ENCODE measurements at regions of chr15 and their contacts with region 1.

Region 1: GRCh38 chr15:74635228-74635627 is 19.6 kb downstream of the CLK3 start:
- DNase-seq: no peak
- ATAC-seq: peak; percentile 91
- H3K4me3 ChIP-seq: no peak overlapping the region
- H3K27ac ChIP-seq: no peak overlapping the region
- H3K4me1 ChIP-seq: no peaks in the 10 kb centered on the region
- H3K27me3 ChIP-seq: no peaks in the 10 kb centered on the region
- CTCF ChIP-seq: peak; percentile 89 to 98 (median 95); a peak in 5 of 6 replicates
- EP300 ChIP-seq: no peak
- POLR2A ChIP-seq: 0 out of 2 replicates have a peak, but pooled peaks have one; percentile 12
- RAD21 ChIP-seq: peak; percentile 95

Region 2: GRCh38 chr15:74240002-74240568 is 395.1 kb before region 1 on chr15:
- CTCF ChIA-PET with region 1: no interaction called
- POLR2A ChIA-PET with region 1: no interaction called
- RAD21 ChIA-PET with region 1: no interaction called
- SMC1A ChIA-PET with region 1: no interaction called
- in situ Hi-C with region 1: no loop called
- intact Hi-C with region 1: no loop called
- DNase-seq: no peak
- ATAC-seq: no peak
- H3K4me3 ChIP-seq: no peak overlapping the region
- H3K27ac ChIP-seq: no peak overlapping the region
- H3K4me1 ChIP-seq: peaks cover 10% of the 10 kb centered on the region
- H3K27me3 ChIP-seq: no peaks in the 10 kb centered on the region; a peak in 1 of 4 replicates
- CTCF ChIP-seq: 0 out of 6 replicates have a peak, but pooled peaks of 1 of the 3 experiments have one; percentile 1
- EP300 ChIP-seq: no peak
- POLR2A ChIP-seq: no peak
- RAD21 ChIP-seq: no peak

Region 3: DNA sequence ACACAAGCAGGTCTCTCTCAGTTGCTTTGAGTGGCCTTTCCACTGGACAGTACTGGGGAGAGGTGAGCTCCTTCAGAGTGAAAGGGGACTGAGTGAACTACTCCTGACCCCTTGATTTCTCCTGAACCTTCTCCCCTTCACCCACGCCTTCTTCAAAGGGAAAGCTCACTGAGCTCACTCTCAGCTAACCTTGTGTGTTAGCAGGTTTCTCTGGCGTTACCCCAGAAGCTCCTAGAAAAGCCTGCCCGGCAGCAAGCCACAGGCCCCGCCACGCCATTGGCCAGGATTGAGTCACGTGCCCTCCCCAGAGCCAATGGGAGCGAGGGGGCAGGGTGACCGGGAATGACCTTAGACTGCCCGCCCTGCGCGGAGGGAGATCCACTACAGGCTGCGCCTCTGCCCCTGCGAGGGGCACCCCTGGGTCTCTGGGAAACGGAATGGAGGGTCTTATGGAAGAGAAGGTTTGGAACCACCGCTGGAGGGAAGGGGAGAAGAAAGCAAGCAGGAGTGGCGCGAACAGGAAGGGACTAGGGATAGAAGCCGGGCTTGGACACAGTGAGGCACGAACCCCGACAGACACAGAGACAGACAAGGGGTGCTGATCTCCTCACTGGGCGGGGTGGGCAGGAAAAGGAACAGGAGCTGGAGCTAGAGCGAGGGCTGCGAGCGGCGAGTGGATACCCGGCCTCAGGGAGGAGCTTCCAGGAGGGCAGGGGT is 36.9 kb before region 1 on chr15:
- CTCF ChIA-PET with region 1: interaction called, 13 read pairs
- POLR2A ChIA-PET with region 1: no interaction called
- RAD21 ChIA-PET with region 1: interaction called, 3 read pairs
- SMC1A ChIA-PET with region 1: interaction called, 4 read pairs
- in situ Hi-C with region 1: no loop called
- intact Hi-C with region 1: no loop called
- DNase-seq: peak; percentile 69
- ATAC-seq: peak; percentile 99
- H3K4me3 ChIP-seq: peak overlapping the region; percentile 74
- H3K27ac ChIP-seq: peak overlapping the region; percentile 73
- H3K4me1 ChIP-seq: peaks cover 12% of the 10 kb centered on the region; the same call in 1 of the 2 replicates
- H3K27me3 ChIP-seq: no peaks in the 10 kb centered on the region
- CTCF ChIP-seq: no peak
- EP300 ChIP-seq: no peak
- POLR2A ChIP-seq: peak; percentile 95
- RAD21 ChIP-seq: no peak

Region 4: DNA sequence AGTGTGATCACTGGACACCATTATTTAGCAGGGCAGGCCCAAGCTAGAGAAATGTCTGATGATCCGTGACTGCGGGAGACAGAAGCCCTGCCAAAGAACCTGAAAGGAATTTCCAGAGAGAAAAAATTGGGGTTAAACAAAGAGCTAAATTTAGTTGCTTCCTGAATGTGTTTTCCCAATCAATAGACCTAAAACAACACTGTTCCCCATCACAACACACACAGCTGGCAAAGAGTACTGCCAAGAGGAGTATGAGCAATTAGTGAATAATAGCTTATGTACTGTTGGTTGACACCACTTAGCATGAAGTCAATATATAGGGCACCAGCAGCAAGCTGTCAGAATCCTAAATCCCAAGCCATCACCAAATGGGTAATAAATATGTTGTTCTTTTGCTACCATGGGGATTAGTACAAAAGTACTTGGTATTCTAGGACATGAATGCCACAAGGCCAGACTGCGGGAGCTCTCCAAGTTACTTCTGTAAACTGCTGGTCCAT is 16.1 kb after region 1 on chr15:
- CTCF ChIA-PET with region 1: interaction called, 21 read pairs
- POLR2A ChIA-PET with region 1: no interaction called
- RAD21 ChIA-PET with region 1: interaction called, 4 read pairs
- SMC1A ChIA-PET with region 1: interaction called, 9 read pairs
- in situ Hi-C with region 1: no loop called
- intact Hi-C with region 1: no loop called
- DNase-seq: no peak
- ATAC-seq: no peak
- H3K4me3 ChIP-seq: no peak overlapping the region
- H3K27ac ChIP-seq: no peak overlapping the region
- H3K4me1 ChIP-seq: peaks cover 9% of the 10 kb centered on the region; the same call in 1 of the 2 replicates
- H3K27me3 ChIP-seq: no peaks in the 10 kb centered on the region
- CTCF ChIP-seq: no peak
- EP300 ChIP-seq: no peak
- POLR2A ChIP-seq: no peak
- RAD21 ChIP-seq: no peak

Region 5: GRCh38 chr15:74723754-74724334 is 88.6 kb after region 1 on chr15:
- CTCF ChIA-PET with region 1: no interaction called
- POLR2A ChIA-PET with region 1: no interaction called
- RAD21 ChIA-PET with region 1: no interaction called
- SMC1A ChIA-PET with region 1: no interaction called
- in situ Hi-C with region 1: no loop called
- intact Hi-C with region 1: no loop called
- DNase-seq: no peak
- ATAC-seq: peak; percentile 48; the same call in 2 of the 3 replicates
- H3K4me3 ChIP-seq: no peak overlapping the region
- H3K27ac ChIP-seq: no peak overlapping the region
- H3K4me1 ChIP-seq: peaks cover 4% of the 10 kb centered on the region
- H3K27me3 ChIP-seq: peaks cover 0 to 3% of the 10 kb centered on the region in 2 experiments; a peak in 3 of 4 replicates
- CTCF ChIP-seq: no peak
- EP300 ChIP-seq: no peak
- POLR2A ChIP-seq: no peak
- RAD21 ChIP-seq: no peak

Region 6: GRCh38 chr15:74746389-74746788 is 111.2 kb after region 1 on chr15:
- CTCF ChIA-PET with region 1: no interaction called
- POLR2A ChIA-PET with region 1: no interaction called
- RAD21 ChIA-PET with region 1: no interaction called
- SMC1A ChIA-PET with region 1: no interaction called
- in situ Hi-C with region 1: no loop called
- intact Hi-C with region 1: no loop called
- DNase-seq: no peak
- ATAC-seq: no peak
- H3K4me3 ChIP-seq: no peak overlapping the region
- H3K27ac ChIP-seq: no peak overlapping the region
- H3K4me1 ChIP-seq: no peaks in the 10 kb centered on the region
- H3K27me3 ChIP-seq: no peaks in the 10 kb centered on the region
- CTCF ChIP-seq: no peak
- EP300 ChIP-seq: no peak
- POLR2A ChIP-seq: no peak
- RAD21 ChIP-seq: no peak

Region 7: DNA sequence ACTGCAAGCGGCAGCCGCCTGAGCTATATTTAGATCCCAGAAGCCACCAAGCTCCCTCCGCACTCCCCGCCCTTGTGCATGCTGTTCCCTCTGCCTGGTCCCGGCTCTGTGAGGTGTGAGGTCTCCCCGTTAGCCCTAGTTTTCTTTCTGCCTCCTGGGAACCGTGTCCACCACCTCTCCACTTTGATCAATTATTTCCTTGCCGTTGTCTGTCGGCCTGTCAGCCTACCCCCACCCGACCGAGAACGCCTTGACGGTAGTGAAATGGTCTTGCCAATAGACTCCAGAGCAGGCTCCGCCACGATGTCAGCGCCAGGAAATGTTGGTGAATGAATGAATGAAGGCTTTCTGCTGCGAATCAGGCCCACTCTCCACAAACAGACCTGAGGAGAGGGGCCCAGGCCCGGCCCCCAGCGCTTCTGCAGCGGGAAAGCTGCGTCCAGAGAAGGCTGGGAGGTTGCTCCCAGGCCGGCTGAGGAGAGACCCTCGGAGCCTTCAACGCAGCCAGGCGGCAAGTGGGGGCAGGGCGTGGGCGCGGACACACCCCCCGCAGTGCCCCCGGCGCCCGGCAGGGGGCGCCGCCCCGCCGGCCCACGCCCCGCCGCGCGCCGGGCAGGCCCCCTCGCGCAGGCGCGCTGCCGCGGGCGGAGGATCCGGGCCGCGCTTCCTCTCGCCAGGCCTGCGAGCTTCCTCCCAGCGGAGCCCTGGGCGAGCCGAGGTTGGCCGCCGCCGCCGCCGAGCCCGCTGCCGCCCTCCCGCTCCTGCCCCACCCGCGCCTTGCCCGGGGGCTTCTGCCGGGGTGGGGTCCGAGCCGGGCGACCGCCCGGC is 146.4 kb after region 1 on chr15 and contains the start of gene CSK:
- CTCF ChIA-PET with region 1: interaction called, 14 read pairs
- POLR2A ChIA-PET with region 1: interaction called, 3 read pairs
- RAD21 ChIA-PET with region 1: interaction called, 3 read pairs
- SMC1A ChIA-PET with region 1: interaction called, 5 read pairs
- in situ Hi-C with region 1: no loop called
- intact Hi-C with region 1: no loop called
- DNase-seq: no peak
- ATAC-seq: no peak; the same call in 2 of the 3 replicates
- H3K4me3 ChIP-seq: peak within 1 kb of the TSS; percentile 94
- H3K27ac ChIP-seq: peak within 1 kb of the TSS; percentile 96
- H3K4me1 ChIP-seq: peaks cover 59% of the 10 kb centered on the region
- H3K27me3 ChIP-seq: no peaks in the 10 kb centered on the region
- CTCF ChIP-seq: peak; percentile 52 to 62 (median 62); a peak in 5 of 6 replicates
- EP300 ChIP-seq: peak in 1 of 2 experiments; percentile 6; a peak in 1 of 4 replicates
- POLR2A ChIP-seq: peak; percentile 78
- RAD21 ChIP-seq: peak; percentile 28; the same call in 1 of the 2 replicates
- polyA plus RNA-seq, gene CSK: 3.4 to 11.5 TPM

Region 8: DNA sequence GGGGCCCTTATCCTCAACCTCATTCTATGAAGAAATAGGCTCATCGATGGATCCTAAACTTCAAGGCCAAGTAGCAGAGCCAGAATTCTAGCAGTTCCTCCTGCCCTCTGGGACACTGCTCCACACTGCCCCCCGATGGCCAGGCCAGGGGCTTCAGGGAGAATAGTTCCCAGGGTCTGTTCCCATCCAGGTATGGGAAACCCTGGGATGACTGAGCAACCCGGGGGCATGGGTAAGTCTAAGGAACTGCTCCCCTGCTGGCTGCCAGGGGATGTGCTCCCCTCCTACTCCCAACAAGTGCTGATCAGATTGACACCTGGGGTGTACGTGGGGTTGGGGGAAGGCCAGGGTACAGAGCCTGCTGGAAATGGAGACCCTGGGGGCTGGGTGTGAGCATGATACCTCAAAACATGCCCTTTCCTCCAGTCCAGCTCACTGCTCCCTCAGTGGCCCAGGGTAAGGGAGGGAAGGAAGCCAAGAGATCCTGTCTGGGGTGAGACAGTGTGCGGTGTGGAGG is 200.1 kb after region 1 on chr15:
- CTCF ChIA-PET with region 1: interaction called, 5 read pairs
- POLR2A ChIA-PET with region 1: no interaction called
- RAD21 ChIA-PET with region 1: interaction called, 3 read pairs
- SMC1A ChIA-PET with region 1: no interaction called
- in situ Hi-C with region 1: no loop called
- intact Hi-C with region 1: loop called (anchors 5 kb)
- DNase-seq: no peak
- ATAC-seq: peak; percentile 69
- H3K4me3 ChIP-seq: no peak overlapping the region
- H3K27ac ChIP-seq: no peak overlapping the region
- H3K4me1 ChIP-seq: no peaks in the 10 kb centered on the region
- H3K27me3 ChIP-seq: no peaks in the 10 kb centered on the region
- CTCF ChIP-seq: peak; percentile 65 to 86 (median 83)
- EP300 ChIP-seq: no peak
- POLR2A ChIP-seq: no peak
- RAD21 ChIP-seq: peak; percentile 69